ENCODE measurements at regions of chr3 and their contacts with region 1.

Region 1: GRCh38 chr3:63993653-63994079 is 29.6 kb downstream of the PSMD6 start:
- DNase-seq: peak; percentile 65
- H3K4me3 Mint-ChIP-seq: no peak overlapping the region
- H3K27ac Mint-ChIP-seq: peak overlapping the region; percentile 41
- H3K4me1 Mint-ChIP-seq: peaks cover 31% of the 10 kb centered on the region
- H3K27me3 Mint-ChIP-seq: no peaks in the 10 kb centered on the region

Region 2: GRCh38 chr3:63911873-63912767 is 81.5 kb before region 1 on chr3 and contains the start of gene SCAANT1:
- CTCF ChIA-PET with region 1: interaction called, 4 read pairs
- intact Hi-C with region 1: loop called (anchors 1 kb)
- DNase-seq: peak; percentile 78
- H3K4me3 Mint-ChIP-seq: peak within 1 kb of the TSS; percentile 87
- H3K27ac Mint-ChIP-seq: peak within 1 kb of the TSS; percentile 93
- H3K4me1 Mint-ChIP-seq: peaks cover 38% of the 10 kb centered on the region
- H3K27me3 Mint-ChIP-seq: no peaks in the 10 kb centered on the region
- total RNA-seq, gene SCAANT1: not detected

Region 3: GRCh38 chr3:63967675-63968611 is 25.7 kb before region 1 on chr3:
- CTCF ChIA-PET with region 1: interaction called, 52 read pairs
- intact Hi-C with region 1: no loop called
- DNase-seq: peak; percentile 48
- H3K4me3 Mint-ChIP-seq: peak overlapping the region; percentile 78
- H3K27ac Mint-ChIP-seq: peak overlapping the region; percentile 93
- H3K4me1 Mint-ChIP-seq: peaks cover 72% of the 10 kb centered on the region
- H3K27me3 Mint-ChIP-seq: no peaks in the 10 kb centered on the region

Region 4: GRCh38 chr3:63980835-63981498 is 12.7 kb before region 1 on chr3:
- CTCF ChIA-PET with region 1: interaction called, 21 read pairs
- intact Hi-C with region 1: loop called (anchors 1 kb)
- DNase-seq: no peak
- H3K4me3 Mint-ChIP-seq: no peak overlapping the region
- H3K27ac Mint-ChIP-seq: peak overlapping the region; percentile 22
- H3K4me1 Mint-ChIP-seq: peaks cover 78% of the 10 kb centered on the region
- H3K27me3 Mint-ChIP-seq: no peaks in the 10 kb centered on the region